ENCODE measurements at regions of chr1 and their contacts with region 1.

Region 1: DNA sequence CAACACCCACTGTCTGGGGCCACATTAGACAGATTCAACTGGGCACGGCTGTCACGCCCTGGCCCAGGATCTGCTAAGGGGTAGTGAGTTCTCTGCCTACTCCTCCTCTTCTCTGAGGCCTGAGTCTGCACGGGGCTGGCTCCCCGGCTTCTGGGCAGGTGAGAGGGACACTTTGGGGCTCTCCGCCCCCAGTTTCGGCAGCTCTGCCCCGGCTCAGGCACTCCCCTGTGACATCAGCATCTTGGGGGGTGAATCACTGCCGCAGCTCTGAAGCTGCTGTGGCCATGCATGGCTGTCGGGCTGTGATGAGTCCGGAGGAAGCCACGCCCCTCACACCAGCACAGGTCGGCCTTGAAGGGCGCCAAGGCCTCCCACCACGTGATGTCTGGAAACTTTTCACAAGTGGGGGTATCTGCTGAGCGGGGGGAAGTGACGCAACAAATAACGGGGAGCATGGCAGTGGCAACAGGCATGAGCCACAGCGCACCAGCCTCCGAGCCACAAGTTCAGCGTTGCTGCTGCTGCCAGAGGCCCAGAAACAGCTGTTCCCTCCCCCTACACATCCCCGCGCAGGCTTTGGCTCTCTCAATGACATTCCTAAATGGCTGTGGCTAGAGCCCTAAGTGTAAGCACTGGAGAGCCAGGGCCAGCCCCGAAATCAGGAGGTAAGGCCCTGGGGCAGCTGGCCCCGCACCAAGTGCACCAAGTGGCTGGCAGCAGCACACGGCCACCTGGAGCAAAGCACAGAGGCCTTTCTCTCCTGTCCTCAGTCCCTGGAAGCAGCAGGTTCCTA is 26.3 kb downstream of the ZBTB17 start:
- DNase-seq: peak; percentile 96
- H3K4me3 Mint-ChIP-seq: peak overlapping the region; percentile 54
- H3K27ac Mint-ChIP-seq: peak overlapping the region; percentile 93
- H3K4me1 Mint-ChIP-seq: peaks cover 72% of the 10 kb centered on the region
- H3K27me3 Mint-ChIP-seq: no peaks in the 10 kb centered on the region

Region 2: GRCh38 chr1:15584489-15585363 is 364.9 kb before region 1 on chr1 and contains the start of gene AGMAT:
- CTCF ChIA-PET with region 1: no interaction called
- POLR2A ChIA-PET with region 1: no interaction called
- intact Hi-C with region 1: no loop called
- DNase-seq: peak; percentile 79
- H3K4me3 Mint-ChIP-seq: peak within 1 kb of the TSS; percentile 79
- H3K27ac Mint-ChIP-seq: peak within 1 kb of the TSS; percentile 76
- H3K4me1 Mint-ChIP-seq: peaks cover 23% of the 10 kb centered on the region
- H3K27me3 Mint-ChIP-seq: no peaks in the 10 kb centered on the region
- total RNA-seq, gene AGMAT: 13.9 to 15.2 TPM

Region 3: GRCh38 chr1:15835741-15836510 is 113.7 kb before region 1 on chr1:
- CTCF ChIA-PET with region 1: interaction called, 3 read pairs
- POLR2A ChIA-PET with region 1: interaction called, 3 read pairs
- intact Hi-C with region 1: loop called (anchors 1 kb)
- DNase-seq: peak; percentile 100
- H3K4me3 Mint-ChIP-seq: peak overlapping the region; percentile 81
- H3K27ac Mint-ChIP-seq: peak overlapping the region; percentile 96
- H3K4me1 Mint-ChIP-seq: peaks cover 18% of the 10 kb centered on the region
- H3K27me3 Mint-ChIP-seq: no peaks in the 10 kb centered on the region

Region 4: DNA sequence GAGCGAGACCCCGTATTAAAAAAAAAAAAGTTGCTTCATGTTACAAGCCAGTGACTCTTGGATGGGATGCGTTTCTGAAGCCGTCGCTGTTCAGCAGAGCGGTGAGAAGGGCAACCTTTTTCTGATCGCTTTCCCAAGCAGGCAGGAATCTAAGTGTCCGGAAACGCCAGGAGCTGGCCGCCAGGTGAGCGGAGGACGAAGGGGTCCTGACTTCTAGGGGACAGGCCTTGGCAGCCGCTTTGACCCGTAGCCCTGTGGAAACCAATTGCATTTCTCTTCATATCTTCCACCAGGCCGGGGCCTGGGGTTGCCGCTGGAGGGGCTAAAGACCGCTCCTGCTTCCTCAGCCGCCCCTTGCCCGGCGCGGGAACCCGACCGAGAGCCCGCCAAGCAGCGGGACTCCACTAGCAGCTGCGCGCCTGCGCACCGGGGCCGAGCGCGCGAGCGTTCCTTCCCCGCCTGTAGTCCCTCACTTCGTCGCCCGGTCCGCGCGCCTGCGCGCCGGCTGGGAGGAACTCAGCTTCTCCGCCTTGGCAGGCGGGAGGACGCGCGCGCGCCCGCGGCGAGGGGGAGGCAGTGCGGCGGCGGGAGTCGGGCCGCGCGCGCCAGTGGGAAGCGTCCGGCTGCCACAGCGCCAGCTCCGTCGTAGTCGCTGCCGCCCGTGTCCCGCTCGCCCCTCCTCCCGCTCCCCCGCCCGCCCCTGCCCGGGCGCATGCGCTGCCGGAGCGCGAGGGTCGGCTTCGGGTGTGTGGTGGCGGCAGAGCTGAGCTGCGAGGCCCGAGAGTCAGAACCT is 102.4 kb before region 1 on chr1 and contains the start of gene SPEN:
- CTCF ChIA-PET with region 1: interaction called, 3 read pairs
- POLR2A ChIA-PET with region 1: interaction called, 9 read pairs
- intact Hi-C with region 1: loop called (anchors 1 kb)
- DNase-seq: peak; percentile 98
- H3K4me3 Mint-ChIP-seq: peak within 1 kb of the TSS; percentile 98
- H3K27ac Mint-ChIP-seq: peak within 1 kb of the TSS; percentile 93
- H3K4me1 Mint-ChIP-seq: peaks cover 45% of the 10 kb centered on the region
- H3K27me3 Mint-ChIP-seq: no peaks in the 10 kb centered on the region
- total RNA-seq, gene SPEN: 37.0 to 41.9 TPM

Region 5: DNA sequence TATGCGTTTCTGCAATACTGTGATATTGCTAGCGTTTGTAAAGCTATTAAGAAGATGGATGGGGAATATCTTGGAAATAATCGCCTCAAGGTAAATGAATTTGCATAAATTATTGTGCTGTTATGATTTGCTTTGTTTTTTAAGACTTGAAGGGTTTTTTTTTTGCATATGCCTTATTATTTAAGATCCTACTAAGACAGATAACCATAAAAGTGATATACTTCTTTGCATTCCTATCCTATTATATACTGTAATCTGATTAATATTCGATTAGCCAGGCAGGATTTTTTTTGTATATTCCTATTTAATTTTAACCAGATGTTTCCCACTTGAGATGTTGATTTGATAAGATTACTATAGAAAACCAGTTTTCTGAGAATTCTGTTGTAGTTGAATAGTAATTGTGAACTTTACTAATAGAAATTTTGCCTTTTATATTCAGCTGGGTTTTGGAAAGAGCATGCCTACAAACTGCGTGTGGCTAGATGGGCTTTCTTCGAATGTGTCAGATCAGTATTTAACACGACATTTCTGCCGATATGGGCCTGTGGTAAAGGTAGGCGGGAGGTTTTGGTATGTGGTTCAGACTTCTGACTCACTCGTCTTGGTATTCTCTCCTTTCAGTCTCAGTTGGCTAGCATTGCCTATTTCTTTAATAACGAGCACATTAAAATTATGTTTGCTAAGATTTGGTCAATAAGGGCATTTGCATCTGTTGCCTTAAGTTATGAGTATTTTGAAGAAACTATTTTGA is 30.5 kb before region 1 on chr1:
- CTCF ChIA-PET with region 1: no interaction called
- POLR2A ChIA-PET with region 1: interaction called, 4 read pairs
- intact Hi-C with region 1: loop called (anchors 1 kb)
- DNase-seq: peak; percentile 89
- H3K4me3 Mint-ChIP-seq: no peak overlapping the region
- H3K27ac Mint-ChIP-seq: no peak overlapping the region
- H3K4me1 Mint-ChIP-seq: peaks cover 41% of the 10 kb centered on the region
- H3K27me3 Mint-ChIP-seq: no peaks in the 10 kb centered on the region

Region 6: DNA sequence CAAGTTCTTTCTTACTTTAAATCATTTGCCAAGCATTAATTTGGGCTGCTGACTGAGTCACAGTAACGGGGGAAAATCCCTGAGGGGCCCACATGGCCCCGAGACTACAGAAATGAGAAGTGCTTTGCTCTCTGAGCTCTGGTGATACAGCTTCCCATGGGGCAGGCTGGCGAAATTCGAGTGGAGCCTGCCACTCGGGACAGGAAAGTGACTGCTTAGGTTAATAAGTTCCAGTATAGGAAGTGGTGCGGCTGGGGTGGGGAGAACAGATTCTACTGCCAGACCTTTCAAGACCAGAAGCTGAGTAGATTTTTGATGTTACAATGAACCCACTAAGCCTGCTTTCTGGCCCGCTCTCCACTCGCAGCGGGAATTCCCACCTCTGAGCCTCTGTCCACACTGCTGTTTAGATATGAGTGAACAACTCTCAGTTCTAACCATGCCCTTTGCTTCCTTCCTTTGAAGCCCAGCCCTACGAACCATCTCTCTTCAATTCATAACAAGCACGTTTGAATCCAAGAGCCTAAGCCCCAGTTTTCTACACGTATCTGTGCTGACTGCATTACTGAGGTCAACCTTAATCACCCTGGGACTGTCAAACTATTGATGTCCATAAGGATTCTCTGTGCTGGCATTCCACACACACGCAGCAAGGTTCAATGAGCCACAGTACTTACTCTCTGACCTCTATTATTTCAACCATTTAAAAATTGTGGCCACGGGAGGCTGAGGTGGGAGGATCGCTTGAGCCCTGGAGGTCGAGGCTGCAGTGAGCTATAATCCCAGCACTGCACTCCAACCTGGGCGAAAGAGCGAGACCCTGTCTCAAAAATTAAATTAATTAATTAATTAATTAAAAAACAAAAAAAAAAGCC is 16.7 kb after region 1 on chr1:
- CTCF ChIA-PET with region 1: interaction called, 16 read pairs
- POLR2A ChIA-PET with region 1: interaction called, 95 read pairs
- intact Hi-C with region 1: loop called (anchors 1 kb)
- DNase-seq: peak; percentile 94
- H3K4me3 Mint-ChIP-seq: peak overlapping the region; percentile 74
- H3K27ac Mint-ChIP-seq: peak overlapping the region; percentile 100
- H3K4me1 Mint-ChIP-seq: peaks cover 81% of the 10 kb centered on the region
- H3K27me3 Mint-ChIP-seq: no peaks in the 10 kb centered on the region

Region 7: DNA sequence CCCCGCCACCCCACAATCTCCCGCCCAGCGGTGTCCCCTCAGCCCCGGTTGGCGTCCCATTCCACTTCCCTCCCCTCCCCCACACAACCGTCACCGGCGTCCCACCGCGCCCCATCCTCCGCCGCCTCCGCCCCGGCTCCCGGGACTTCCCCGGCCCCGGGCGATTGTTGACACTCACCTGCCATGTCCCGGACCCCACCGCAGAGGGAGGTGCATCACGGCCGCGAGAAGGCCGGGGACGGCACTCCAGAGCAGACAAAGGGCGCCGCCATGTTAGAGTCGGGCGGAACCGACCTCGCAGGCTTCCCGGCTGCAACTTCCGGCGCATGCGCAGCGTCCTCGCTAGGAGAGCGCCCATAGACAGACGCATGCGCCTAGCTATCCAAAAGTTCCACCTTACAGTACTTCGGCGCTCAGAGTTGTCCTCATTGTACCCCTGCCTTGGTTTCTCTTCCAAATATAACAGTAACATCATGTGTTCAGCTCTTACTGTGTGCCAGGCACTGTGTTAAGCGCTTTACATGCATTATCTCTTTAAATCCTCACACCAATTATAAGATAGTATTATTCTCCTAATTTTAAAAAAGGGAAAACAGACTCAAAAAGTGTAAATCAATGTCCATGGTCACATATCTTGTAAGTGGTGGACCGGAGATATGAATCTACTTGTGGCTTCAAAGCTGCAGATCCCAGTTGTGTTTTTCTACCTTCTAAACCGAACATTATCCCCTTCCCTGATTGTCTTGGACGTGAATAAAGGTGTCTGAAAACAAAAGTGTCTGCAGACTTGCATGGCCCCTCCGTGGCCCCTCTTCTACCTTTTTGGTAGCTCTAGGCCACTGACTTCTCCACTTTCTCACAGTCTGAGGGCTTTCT is 26.4 kb after region 1 on chr1 and contains the start of gene ZBTB17:
- CTCF ChIA-PET with region 1: interaction called, 6 read pairs
- POLR2A ChIA-PET with region 1: interaction called, 63 read pairs
- intact Hi-C with region 1: loop called (anchors 1 kb)
- DNase-seq: peak; percentile 97
- H3K4me3 Mint-ChIP-seq: peak within 1 kb of the TSS; percentile 87
- H3K27ac Mint-ChIP-seq: peak within 1 kb of the TSS; percentile 94
- H3K4me1 Mint-ChIP-seq: peaks cover 38% of the 10 kb centered on the region
- H3K27me3 Mint-ChIP-seq: no peaks in the 10 kb centered on the region
- total RNA-seq, gene ZBTB17: 52.7 to 58.8 TPM

Region 8: GRCh38 chr1:16334655-16335340 is 385.1 kb after region 1 on chr1:
- CTCF ChIA-PET with region 1: no interaction called
- POLR2A ChIA-PET with region 1: no interaction called
- intact Hi-C with region 1: no loop called
- DNase-seq: no peak
- H3K4me3 Mint-ChIP-seq: no peak overlapping the region
- H3K27ac Mint-ChIP-seq: no peak overlapping the region
- H3K4me1 Mint-ChIP-seq: peaks cover 20% of the 10 kb centered on the region
- H3K27me3 Mint-ChIP-seq: no peaks in the 10 kb centered on the region